ENCODE measurements at regions of chr3 and their contacts with region 1.

Region 1: GRCh38 chr3:178385280-178385952 is 150.8 kb upstream of the KCNMB2 start:
- DNase-seq: peak; percentile 71
- H3K4me3 ChIP-seq: no peak overlapping the region
- H3K27ac ChIP-seq: no peak overlapping the region
- H3K4me1 ChIP-seq: peaks cover 35% of the 10 kb centered on the region
- H3K27me3 ChIP-seq: no peaks in the 10 kb centered on the region
- CTCF ChIP-seq: peak; percentile 53 to 77
- POLR2A ChIP-seq: no peak

Region 2: GRCh38 chr3:176514297-176514696 is 1871.1 kb before region 1 on chr3:
- CTCF ChIA-PET with region 1: interaction called, 21 read pairs
- POLR2A ChIA-PET with region 1: no interaction called
- dilution Hi-C with region 1: no loop called
- intact Hi-C with region 1: loop called (anchors 1 kb)
- DNase-seq: peak; percentile 73
- H3K4me3 ChIP-seq: no peak overlapping the region
- H3K27ac ChIP-seq: no peak overlapping the region
- H3K4me1 ChIP-seq: no peaks in the 10 kb centered on the region
- H3K27me3 ChIP-seq: no peaks in the 10 kb centered on the region
- CTCF ChIP-seq: peak; percentile 34 to 41
- POLR2A ChIP-seq: no peak

Region 3: DNA sequence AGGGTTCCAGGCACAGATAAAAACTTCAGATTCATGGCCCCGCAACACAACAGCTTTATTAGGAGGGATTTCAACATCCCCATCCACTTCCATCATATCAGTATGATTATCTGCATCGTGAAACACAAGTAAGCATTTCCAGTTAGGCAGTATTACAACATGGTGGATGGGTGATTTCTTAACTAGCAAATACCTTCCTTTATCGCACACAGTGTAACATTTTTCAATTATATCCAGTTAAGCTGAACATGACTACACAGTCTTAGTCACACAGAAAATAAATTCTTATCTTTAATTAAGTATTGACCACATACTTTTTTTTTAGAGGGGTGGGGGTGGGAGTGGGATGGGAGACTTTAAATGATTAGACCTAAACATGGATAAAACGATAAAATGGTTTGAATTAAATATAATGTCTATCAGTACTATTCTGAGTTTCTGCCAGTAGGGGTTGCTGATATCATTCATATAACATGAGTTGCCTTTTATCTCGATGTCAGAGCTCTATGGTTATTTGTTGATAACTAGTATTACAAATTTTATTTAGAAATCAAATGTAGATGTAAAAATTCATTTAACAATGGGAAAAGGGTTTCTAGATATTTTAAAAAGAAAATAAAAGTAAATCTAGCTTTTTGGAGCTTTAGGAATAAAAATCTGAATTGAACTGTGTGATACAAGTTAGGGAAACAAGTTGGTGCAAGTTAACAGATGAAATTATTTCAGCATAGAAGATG is 1334.7 kb before region 1 on chr3:
- CTCF ChIA-PET with region 1: interaction called, 50 read pairs
- POLR2A ChIA-PET with region 1: no interaction called
- dilution Hi-C with region 1: no loop called
- intact Hi-C with region 1: loop called (anchors 1 kb)
- DNase-seq: peak; percentile 71
- H3K4me3 ChIP-seq: no peak overlapping the region
- H3K27ac ChIP-seq: no peak overlapping the region
- H3K4me1 ChIP-seq: no peaks in the 10 kb centered on the region
- H3K27me3 ChIP-seq: no peaks in the 10 kb centered on the region
- CTCF ChIP-seq: no peak
- POLR2A ChIP-seq: no peak

Region 4: DNA sequence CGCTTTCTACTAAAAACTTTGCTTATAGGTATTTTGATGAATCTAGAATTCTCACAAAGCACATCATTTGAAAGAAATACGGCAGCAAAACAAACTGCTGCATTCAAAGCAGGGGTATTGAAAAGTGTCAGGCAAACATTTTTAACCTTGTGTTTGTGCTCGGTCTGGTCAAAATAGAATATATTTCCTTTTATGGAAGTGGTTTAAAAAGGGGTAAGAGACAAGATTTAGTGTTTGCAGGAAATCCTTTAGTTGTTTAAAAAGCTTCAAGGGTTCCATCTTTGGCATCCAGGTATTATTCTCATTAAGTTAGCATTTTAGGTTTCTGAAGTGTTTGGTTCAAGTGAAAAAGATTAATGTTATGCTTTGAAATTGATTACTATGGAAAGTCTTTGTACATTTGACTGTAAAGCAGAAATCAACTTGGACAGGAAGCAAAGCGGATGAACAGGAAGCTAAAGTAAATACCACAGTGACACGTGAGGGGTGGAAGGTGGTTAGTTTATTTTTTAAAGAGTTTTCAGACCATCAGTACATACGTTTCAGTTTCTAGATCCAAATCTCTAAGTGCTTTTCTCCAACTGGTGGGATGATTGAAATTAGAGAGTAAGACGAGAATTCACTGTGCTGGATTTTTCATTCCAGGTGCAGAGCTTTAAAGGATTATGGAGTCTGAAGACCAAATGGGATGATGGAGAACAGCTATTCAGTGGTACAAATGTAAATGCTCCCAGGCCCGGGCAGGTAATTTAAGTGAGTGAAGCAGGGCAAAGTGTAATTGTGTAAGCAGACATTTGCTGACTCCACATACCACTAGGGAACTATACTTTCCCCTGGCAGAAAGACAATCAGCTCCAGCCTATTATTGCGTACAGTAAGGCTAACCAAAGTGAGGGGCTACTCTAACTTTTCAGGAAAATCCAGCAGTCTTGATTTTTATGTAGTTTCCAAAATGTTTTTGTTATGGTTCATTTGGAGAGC is 846.4 kb before region 1 on chr3:
- CTCF ChIA-PET with region 1: no interaction called
- POLR2A ChIA-PET with region 1: no interaction called
- dilution Hi-C with region 1: no loop called
- intact Hi-C with region 1: loop called (anchors 10 kb)
- DNase-seq: peak; percentile 44
- H3K4me3 ChIP-seq: no peak overlapping the region
- H3K27ac ChIP-seq: no peak overlapping the region
- H3K4me1 ChIP-seq: peaks cover 15% of the 10 kb centered on the region
- H3K27me3 ChIP-seq: no peaks in the 10 kb centered on the region
- CTCF ChIP-seq: no peak
- POLR2A ChIP-seq: no peak

Region 5: DNA sequence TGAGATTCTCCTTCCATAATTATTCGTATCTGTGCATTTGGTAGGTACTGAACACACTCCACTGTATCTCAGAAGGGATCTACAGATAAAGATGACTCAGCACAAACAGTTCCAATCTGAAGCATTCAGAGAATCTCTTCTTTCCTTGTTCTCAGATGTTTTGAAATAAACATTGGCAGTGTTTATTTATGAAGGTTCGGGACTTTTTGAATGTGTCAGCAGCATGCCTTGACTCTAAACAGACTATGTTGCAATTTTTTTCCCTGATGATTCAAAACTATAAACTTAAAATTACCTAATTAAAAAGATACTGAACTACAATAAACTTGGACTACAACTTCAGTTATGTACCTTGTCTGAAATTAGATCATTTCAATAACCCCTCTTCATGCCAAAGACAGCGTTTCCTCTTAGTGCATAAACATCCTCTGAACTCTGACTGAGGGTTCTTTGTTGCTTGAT is 575.2 kb before region 1 on chr3:
- CTCF ChIA-PET with region 1: no interaction called
- POLR2A ChIA-PET with region 1: no interaction called
- dilution Hi-C with region 1: no loop called
- intact Hi-C with region 1: loop called (anchors 1 kb)
- DNase-seq: peak; percentile 82
- H3K4me3 ChIP-seq: peak overlapping the region in 1 of 3 experiments; percentile 17
- H3K27ac ChIP-seq: peak overlapping the region; percentile 63
- H3K4me1 ChIP-seq: peaks cover 30% of the 10 kb centered on the region
- H3K27me3 ChIP-seq: no peaks in the 10 kb centered on the region
- CTCF ChIP-seq: no peak
- POLR2A ChIP-seq: no peak

Region 6: GRCh38 chr3:178084938-178085816 is 300.2 kb before region 1 on chr3:
- CTCF ChIA-PET with region 1: no interaction called
- POLR2A ChIA-PET with region 1: no interaction called
- dilution Hi-C with region 1: no loop called
- intact Hi-C with region 1: loop called (anchors 1 kb)
- DNase-seq: peak; percentile 86
- H3K4me3 ChIP-seq: no peak overlapping the region
- H3K27ac ChIP-seq: peak overlapping the region; percentile 8
- H3K4me1 ChIP-seq: peaks cover 24% of the 10 kb centered on the region
- H3K27me3 ChIP-seq: no peaks in the 10 kb centered on the region
- CTCF ChIP-seq: no peak
- POLR2A ChIP-seq: no peak

Region 7: DNA sequence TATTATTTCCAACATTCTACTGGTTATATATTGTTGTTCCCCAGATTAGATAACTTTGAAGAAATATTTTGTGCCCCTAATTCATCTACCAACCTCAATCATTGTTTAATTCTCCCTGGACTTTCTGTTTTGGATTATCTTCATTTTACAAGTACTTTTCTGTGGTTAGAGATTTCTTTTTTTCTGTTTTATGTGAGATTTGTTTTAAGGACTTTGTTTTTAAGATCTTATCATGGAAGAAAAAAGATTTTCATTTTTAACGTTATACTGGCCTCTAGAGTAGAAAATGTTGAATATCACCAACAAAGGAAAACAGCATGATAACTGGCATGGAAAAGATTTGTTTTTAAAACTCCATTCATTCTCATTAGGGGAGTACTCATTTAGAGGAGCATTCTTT is 60.1 kb before region 1 on chr3:
- CTCF ChIA-PET with region 1: interaction called, 10 read pairs
- POLR2A ChIA-PET with region 1: no interaction called
- dilution Hi-C with region 1: no loop called
- intact Hi-C with region 1: loop called (anchors 1 kb)
- DNase-seq: peak; percentile 76
- H3K4me3 ChIP-seq: no peak overlapping the region
- H3K27ac ChIP-seq: peak overlapping the region; percentile 2
- H3K4me1 ChIP-seq: peaks cover 13% of the 10 kb centered on the region
- H3K27me3 ChIP-seq: no peaks in the 10 kb centered on the region
- CTCF ChIP-seq: peak in 1 of 2 donors; percentile 15
- POLR2A ChIP-seq: no peak

Region 8: GRCh38 chr3:178536211-178537079 is 151.0 kb after region 1 on chr3 and contains the start of gene KCNMB2:
- CTCF ChIA-PET with region 1: no interaction called
- POLR2A ChIA-PET with region 1: no interaction called
- dilution Hi-C with region 1: no loop called
- intact Hi-C with region 1: no loop called
- DNase-seq: peak; percentile 32
- H3K4me3 ChIP-seq: peak within 1 kb of the TSS; percentile 4 to 67 (median 6)
- H3K27ac ChIP-seq: no peak within 1 kb of the TSS
- H3K4me1 ChIP-seq: peaks cover 24% of the 10 kb centered on the region
- H3K27me3 ChIP-seq: peaks cover 2 to 3% of the 10 kb centered on the region in 2 experiments
- CTCF ChIP-seq: no peak
- POLR2A ChIP-seq: no peak
- total RNA-seq, gene KCNMB2: not detected in 2 replicates

Region 9: DNA sequence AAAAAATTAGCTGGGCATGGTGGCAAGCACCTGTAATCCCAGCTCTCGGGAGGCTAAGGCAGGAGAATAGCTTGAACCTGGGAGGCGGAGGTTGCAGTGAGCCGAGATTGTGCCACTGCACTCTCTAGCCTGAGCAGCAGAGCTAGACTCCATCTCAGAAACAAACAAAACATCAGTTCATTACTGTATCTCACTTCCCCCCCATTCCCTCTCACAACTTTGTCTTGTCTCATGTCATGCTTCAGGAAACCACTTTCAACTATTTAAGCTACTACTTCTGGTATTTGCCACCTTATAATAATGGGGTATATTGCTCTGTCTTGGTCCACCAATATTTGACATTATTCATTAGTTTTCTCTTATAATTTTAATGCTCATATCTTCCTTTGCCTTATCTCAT is 788.9 kb after region 1 on chr3:
- CTCF ChIA-PET with region 1: no interaction called
- POLR2A ChIA-PET with region 1: no interaction called
- dilution Hi-C with region 1: no loop called
- intact Hi-C with region 1: no loop called
- DNase-seq: no peak
- H3K4me3 ChIP-seq: no peak overlapping the region
- H3K27ac ChIP-seq: no peak overlapping the region
- H3K4me1 ChIP-seq: peaks cover 5% of the 10 kb centered on the region
- H3K27me3 ChIP-seq: no peaks in the 10 kb centered on the region
- CTCF ChIP-seq: no peak
- POLR2A ChIP-seq: no peak